K562 (cell line): ENCODE measurements at regions of chr19 and their contacts with region 1.

Region 1: GRCh38 chr19:2261438-2262172 is 5.4 kb upstream of the JSRP1 start:
- DNase-seq: peak in 3 of 4 experiments; percentile 44 to 79 (median 63)
- ATAC-seq: peak; percentile 28; the same call in 2 of the 3 replicates
- H3K4me3 ChIP-seq: no peak overlapping the region
- H3K27ac ChIP-seq: no peak overlapping the region; the same call in 2 of the 3 replicates
- H3K4me1 ChIP-seq: peaks cover 21 to 51% of the 10 kb centered on the region in 2 experiments
- H3K27me3 ChIP-seq: no peaks in the 10 kb centered on the region
- CTCF ChIP-seq: peak; percentile 64 to 79 (median 74)
- EP300 ChIP-seq: no peak
- POLR2A ChIP-seq: no peak
- RAD21 ChIP-seq: peak; percentile 18 to 42; a peak in 2 of 4 replicates

Region 2: GRCh38 chr19:2249880-2250764 is 11.5 kb before region 1 on chr19:
- CTCF ChIA-PET with region 1: no interaction called
- POLR2A ChIA-PET with region 1: interaction called, 35 read pairs
- in situ Hi-C with region 1: no loop called
- intact Hi-C with region 1: no loop called
- DNase-seq: no peak
- ATAC-seq: peak; percentile 22
- H3K4me3 ChIP-seq: no peak overlapping the region
- H3K27ac ChIP-seq: no peak overlapping the region
- H3K4me1 ChIP-seq: peaks cover 0 to 70% of the 10 kb centered on the region in 2 experiments; a peak in 2 of 5 replicates
- H3K27me3 ChIP-seq: no peaks in the 10 kb centered on the region
- CTCF ChIP-seq: no peak
- EP300 ChIP-seq: no peak
- POLR2A ChIP-seq: peak; percentile 53
- RAD21 ChIP-seq: no peak